Calu3 (cell line): ENCODE measurements at regions of chr16 and their contacts with region 1.

Region 1: DNA sequence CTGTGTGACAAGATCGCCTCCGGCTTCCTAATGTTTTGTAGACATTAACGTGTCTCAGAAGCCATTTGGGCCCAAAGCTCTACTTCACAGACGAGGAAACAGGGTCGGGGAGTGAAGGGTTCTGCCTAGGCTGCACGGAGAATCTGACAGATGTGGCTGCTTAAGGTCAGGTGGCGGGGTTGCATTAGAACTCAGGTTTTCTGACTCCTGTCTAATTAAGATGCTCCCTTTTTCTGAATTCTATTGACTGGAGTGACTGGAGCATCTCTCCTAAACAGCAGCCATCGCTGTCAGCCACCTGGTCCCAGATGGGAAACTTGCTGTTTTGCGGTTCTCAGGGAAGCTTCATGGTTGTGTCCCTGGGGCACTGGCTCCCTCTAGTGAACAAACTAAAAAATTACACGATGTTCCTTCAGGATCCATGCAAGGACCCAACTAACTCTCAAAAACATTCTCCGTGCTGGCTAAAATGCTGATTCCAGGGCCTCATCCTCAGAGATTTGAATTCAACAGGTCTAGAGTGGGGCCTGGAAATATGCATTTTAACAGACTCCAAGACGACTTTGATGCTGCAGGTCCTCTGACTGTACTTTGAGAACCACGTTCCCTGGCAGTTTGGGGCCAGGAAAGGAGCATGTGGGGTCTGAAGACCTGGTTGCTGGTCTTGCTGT is 117.4 kb downstream of the IRF8 start:
- DNase-seq: peak; percentile 60
- H3K4me3 Mint-ChIP-seq: no peak overlapping the region
- H3K27ac Mint-ChIP-seq: no peak overlapping the region
- H3K4me1 Mint-ChIP-seq: no peaks in the 10 kb centered on the region
- H3K27me3 Mint-ChIP-seq: peaks cover 80% of the 10 kb centered on the region
- CTCF ChIP-seq: peak; percentile 90

Region 2: GRCh38 chr16:85853547-85854545 is 162.5 kb before region 1 on chr16:
- CTCF ChIA-PET with region 1: no interaction called
- intact Hi-C with region 1: no loop called
- DNase-seq: no peak
- H3K4me3 Mint-ChIP-seq: no peak overlapping the region
- H3K27ac Mint-ChIP-seq: no peak overlapping the region
- H3K4me1 Mint-ChIP-seq: peaks cover 10% of the 10 kb centered on the region
- H3K27me3 Mint-ChIP-seq: peaks cover 73% of the 10 kb centered on the region
- CTCF ChIP-seq: no peak

Region 3: DNA sequence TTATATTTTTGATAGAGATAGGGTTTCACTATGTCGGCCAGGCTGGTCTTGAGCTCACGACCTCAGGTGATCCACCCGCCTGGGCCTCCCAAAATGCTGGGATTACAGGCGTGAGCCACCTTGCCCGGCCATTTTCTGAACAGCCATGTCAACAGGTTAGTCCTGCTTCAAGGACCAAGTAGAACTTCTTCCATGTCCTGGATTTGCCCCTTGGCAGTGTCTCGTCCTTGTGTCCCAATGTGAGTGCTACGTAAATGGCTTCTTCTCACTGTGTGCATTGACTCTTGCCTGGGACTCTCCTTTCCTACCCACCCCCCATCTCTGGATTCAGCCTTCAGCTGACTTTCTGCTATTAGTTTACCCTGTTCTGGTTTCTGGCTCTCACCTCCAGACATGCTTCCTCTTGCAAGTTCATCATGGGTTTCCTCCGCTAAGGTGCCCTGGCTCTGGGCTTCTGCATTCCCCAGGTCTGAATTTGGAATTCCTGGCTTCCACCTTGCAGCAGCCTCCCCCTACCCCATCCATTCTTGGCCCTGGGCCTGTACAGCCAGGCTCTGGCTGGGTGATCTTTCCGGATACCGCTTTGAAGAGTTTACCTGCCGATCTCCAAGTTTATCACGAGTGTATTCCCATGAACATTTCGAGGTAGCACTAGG is 131.4 kb before region 1 on chr16:
- CTCF ChIA-PET with region 1: no interaction called
- intact Hi-C with region 1: no loop called
- DNase-seq: no peak
- H3K4me3 Mint-ChIP-seq: no peak overlapping the region
- H3K27ac Mint-ChIP-seq: no peak overlapping the region
- H3K4me1 Mint-ChIP-seq: peaks cover 14% of the 10 kb centered on the region
- H3K27me3 Mint-ChIP-seq: peaks cover 38% of the 10 kb centered on the region
- CTCF ChIP-seq: no peak

Region 4: DNA sequence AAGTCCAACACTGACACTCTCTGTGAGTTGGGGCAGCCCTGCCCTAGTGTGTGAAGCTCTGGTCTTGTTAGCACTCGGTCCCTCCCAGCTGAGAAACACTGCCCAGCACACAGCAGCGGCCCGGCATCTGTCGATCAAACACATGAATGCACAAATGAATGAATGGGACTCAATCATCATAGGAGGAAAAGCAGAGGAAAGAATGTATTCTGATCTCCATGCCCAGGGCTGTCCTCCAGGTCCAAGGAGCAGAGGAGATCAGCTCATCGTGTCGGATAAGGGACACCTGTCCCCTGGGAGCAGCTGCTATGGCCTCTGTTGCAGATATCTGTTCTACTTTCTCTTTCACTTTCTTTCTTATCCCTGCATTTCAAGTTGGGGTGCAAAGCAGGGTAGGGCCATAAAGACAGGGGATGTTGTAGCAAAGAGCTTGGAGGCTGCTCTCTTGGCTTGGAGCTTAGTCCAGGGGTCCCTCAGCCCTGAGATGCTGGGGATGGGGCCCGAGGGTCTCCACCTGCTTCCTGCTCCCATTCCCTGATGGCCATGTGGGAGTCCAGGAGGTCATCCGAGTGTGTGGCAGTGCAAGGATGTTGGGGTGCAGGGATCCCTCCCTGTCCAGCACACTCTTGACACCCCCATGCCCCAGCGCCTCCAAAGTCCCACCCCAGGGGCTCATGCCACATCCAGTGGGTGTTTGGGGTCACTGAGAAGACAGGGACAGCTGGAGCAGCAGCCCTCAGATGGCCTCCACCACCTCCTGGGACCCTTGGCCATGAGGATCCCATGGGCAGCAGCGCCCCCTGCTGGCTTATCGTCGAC is 29.2 kb before region 1 on chr16:
- CTCF ChIA-PET with region 1: interaction called, 11 read pairs
- intact Hi-C with region 1: no loop called
- DNase-seq: peak; percentile 44
- H3K4me3 Mint-ChIP-seq: peak overlapping the region; percentile 48
- H3K27ac Mint-ChIP-seq: no peak overlapping the region
- H3K4me1 Mint-ChIP-seq: peaks cover 8% of the 10 kb centered on the region
- H3K27me3 Mint-ChIP-seq: peaks cover 45% of the 10 kb centered on the region
- CTCF ChIP-seq: peak; percentile 94

Region 5: GRCh38 chr16:86002178-86002900 is 14.0 kb before region 1 on chr16:
- CTCF ChIA-PET with region 1: interaction called, 17 read pairs
- intact Hi-C with region 1: no loop called
- DNase-seq: no peak
- H3K4me3 Mint-ChIP-seq: no peak overlapping the region
- H3K27ac Mint-ChIP-seq: no peak overlapping the region
- H3K4me1 Mint-ChIP-seq: no peaks in the 10 kb centered on the region
- H3K27me3 Mint-ChIP-seq: peaks cover 55% of the 10 kb centered on the region
- CTCF ChIP-seq: no peak

Region 6: GRCh38 chr16:86072328-86073102 is 56.2 kb after region 1 on chr16:
- CTCF ChIA-PET with region 1: no interaction called
- intact Hi-C with region 1: no loop called
- DNase-seq: peak; percentile 73
- H3K4me3 Mint-ChIP-seq: no peak overlapping the region
- H3K27ac Mint-ChIP-seq: no peak overlapping the region
- H3K4me1 Mint-ChIP-seq: no peaks in the 10 kb centered on the region
- H3K27me3 Mint-ChIP-seq: peaks cover 97% of the 10 kb centered on the region
- CTCF ChIP-seq: peak; percentile 71